ENCODE measurements at regions of chr4 and their contacts with region 1.

Region 1: GRCh38 chr4:74932816-74933561 is at the start of gene PARM1:
- DNase-seq: peak; percentile 43 to 95
- H3K4me3 ChIP-seq: peak within 1 kb of the TSS; percentile 72 to 77
- H3K27ac ChIP-seq: peak within 1 kb of the TSS; percentile 87 to 89
- H3K4me1 ChIP-seq: peaks cover 0 to 2% of the 10 kb centered on the region in 2 donors
- H3K27me3 ChIP-seq: no peaks in the 10 kb centered on the region
- CTCF ChIP-seq: peak; percentile 81 to 88 (median 86)
- total RNA-seq, gene PARM1: 116 TPM

Region 2: DNA sequence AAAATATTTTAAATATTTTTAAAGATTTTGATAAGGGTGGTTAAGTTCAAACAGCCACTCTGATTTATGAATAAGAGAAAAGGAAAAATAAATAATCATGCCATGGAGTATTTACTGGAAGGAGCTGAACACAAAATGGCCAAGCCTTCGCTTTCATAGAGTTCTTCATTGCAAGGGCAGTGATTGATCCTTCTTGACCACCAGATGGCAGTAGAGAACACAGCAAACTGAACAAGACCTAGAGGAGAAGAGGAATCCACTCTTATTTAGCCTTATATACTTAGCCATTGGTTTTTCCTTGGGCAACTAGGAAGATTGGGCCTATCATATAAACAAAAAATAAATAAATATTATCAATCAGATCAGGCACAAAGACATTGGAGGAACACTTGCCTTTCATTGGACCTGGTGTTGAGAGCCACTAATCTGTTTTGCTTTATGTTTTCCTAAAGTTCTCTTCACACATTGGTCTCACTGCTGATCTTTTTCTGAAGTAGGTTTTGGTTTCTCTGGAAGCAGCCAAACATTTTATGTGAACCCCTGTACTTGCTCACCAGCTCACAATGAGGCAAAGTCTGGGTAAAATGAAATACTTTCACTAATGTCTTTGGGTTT is 58.1 kb before region 1 on chr4:
- intact Hi-C with region 1: loop called (anchors 1 kb)
- DNase-seq: peak in 1 of 2 donors; percentile 67
- H3K4me3 ChIP-seq: peak overlapping the region in 1 of 2 donors; percentile 33
- H3K27ac ChIP-seq: peak overlapping the region; percentile 52 to 70
- H3K4me1 ChIP-seq: peaks cover 0 to 18% of the 10 kb centered on the region in 2 donors
- H3K27me3 ChIP-seq: no peaks in the 10 kb centered on the region
- CTCF ChIP-seq: peak; percentile 65 to 90 (median 90)

Region 3: GRCh38 chr4:74990276-74990875 is 57.4 kb after region 1 on chr4:
- intact Hi-C with region 1: no loop called
- DNase-seq: no peak
- H3K4me3 ChIP-seq: no peak overlapping the region
- H3K27ac ChIP-seq: no peak overlapping the region
- H3K4me1 ChIP-seq: peaks cover 0 to 22% of the 10 kb centered on the region in 2 donors
- H3K27me3 ChIP-seq: no peaks in the 10 kb centered on the region
- CTCF ChIP-seq: no peak

Region 4: DNA sequence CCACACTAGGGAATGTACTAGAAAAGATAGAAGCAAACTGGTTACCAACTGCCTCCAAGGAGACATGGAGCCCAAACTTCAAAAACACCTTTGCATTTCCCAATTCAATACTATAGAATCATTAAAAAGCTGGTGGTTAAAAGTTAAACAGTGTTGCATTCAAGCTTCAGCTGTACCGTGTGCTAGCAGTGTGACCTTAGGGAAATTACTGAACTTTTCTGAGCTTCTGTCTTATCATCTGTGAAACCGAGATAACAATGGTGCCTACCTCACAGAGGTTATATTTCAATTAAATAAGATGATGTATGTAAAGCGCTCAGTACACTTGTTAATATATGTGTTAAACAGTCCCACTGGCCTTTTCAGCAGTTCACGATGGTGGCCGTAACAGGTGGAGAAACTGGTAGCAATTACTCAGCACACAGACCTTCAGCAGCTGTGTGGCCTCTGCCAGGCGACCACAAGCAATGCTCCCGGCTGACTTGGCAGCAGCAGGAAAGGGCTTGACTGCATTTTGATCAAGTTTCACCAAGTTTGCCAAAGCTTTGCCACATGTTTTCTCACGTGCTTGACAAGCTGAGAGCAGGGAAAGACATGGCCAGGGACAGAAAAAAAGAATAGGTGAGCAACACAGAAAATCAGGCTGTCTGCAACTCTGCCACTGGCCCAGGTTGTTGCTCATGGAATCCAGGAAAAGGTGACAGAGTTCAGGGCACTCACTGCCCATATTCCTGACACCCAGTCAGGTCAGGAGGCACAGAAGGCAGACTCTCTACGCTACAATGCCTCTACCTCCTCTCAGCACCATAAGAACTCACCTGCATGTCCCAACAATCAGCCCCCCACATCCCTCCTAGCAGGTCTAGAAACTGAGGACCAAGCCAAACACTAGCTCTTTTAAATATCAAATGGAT is 72.0 kb after region 1 on chr4:
- intact Hi-C with region 1: loop called (anchors 5 kb)
- DNase-seq: peak in 1 of 2 donors; percentile 63
- H3K4me3 ChIP-seq: no peak overlapping the region
- H3K27ac ChIP-seq: peak overlapping the region; percentile 44 to 53
- H3K4me1 ChIP-seq: peaks cover 0 to 33% of the 10 kb centered on the region in 2 donors
- H3K27me3 ChIP-seq: no peaks in the 10 kb centered on the region
- CTCF ChIP-seq: no peak

Region 5: DNA sequence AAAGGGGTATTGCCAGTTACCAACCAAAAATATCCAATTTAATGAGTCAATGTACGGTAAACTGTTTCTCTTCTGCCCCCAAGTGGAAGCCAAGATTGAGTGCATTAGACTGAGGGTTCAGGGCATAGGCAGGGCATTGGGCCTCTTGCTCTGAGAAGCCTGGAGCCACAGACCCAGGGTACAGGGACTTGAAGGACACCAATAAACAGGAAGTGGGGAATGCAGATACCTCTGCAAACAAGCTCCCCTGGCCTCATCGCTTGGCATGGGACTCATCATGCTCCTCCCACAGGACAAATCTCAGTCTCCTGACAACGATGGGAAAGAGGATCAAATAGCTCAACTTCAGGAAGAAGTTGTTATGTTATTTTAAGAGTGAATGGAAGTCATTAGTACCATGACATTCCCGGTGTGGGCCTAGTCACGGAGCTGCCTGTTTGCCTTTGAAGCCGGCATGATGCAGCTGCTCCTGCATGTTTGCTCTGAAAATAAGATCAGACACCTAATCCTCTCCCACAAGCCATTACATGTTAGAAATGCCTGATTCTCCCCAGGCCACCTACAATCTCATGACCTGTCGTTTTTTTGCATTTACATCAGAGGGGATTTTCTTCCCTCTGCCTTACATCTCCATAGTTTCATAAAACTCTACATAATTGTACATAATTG is 357.1 kb after region 1 on chr4:
- intact Hi-C with region 1: loop called (anchors 2 kb)
- DNase-seq: no peak
- H3K4me3 ChIP-seq: no peak overlapping the region
- H3K27ac ChIP-seq: no peak overlapping the region
- H3K4me1 ChIP-seq: no peaks in the 10 kb centered on the region
- H3K27me3 ChIP-seq: no peaks in the 10 kb centered on the region
- CTCF ChIP-seq: peak in 2 of 3 experiments; percentile 23 to 36

Region 6: GRCh38 chr4:75490155-75490554 is 557.2 kb after region 1 on chr4:
- intact Hi-C with region 1: loop called (anchors 5 kb)
- DNase-seq: no peak
- H3K4me3 ChIP-seq: no peak overlapping the region
- H3K27ac ChIP-seq: peak overlapping the region in 1 of 2 donors; percentile 19
- H3K4me1 ChIP-seq: no peaks in the 10 kb centered on the region
- H3K27me3 ChIP-seq: no peaks in the 10 kb centered on the region
- CTCF ChIP-seq: peak in 1 of 3 experiments; percentile 52

Region 7: DNA sequence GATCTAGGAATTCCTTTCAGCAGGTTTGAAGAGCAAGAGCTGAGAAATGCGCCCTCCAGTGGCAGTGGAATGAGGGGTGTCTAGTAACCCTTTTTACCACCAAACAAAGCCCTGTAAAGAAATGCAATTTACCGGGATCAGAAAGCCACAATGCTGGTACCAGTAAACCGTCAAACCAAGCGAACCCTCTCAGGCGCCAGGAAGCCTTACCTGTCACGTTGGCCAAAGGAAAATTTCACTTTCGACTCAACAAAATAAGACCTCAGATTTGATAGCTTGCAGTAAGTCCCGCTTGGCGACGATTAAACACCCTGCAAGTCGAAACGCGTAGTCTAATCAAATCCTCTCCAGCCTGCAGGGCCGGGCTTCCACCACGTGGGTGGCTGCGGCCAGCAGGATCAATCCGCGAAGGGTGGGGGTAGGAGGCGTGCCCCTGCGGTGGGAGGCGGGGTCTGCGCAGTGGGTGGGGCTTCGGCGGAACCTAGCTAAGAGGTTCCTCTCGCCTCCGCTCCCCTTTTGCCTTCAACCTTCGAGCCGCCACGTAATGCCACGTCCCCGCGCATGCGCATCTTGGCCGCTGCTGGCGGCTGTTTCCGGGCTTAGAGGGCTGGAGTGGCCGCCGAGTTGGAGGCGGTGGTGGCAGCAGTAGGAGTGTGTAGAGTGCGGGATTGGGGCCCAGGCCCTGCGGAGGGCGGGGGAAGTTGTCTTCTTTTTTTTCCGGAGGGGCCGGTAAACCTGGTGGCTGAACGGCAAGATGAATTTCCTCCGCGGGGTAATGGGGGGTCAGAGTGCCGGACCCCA is 791.3 kb after region 1 on chr4 and contains the start of gene USO1:
- intact Hi-C with region 1: loop called (anchors 10 kb)
- DNase-seq: peak; percentile 93 to 99
- H3K4me3 ChIP-seq: peak within 1 kb of the TSS; percentile 78 to 84
- H3K27ac ChIP-seq: peak within 1 kb of the TSS; percentile 97
- H3K4me1 ChIP-seq: peaks cover 3 to 28% of the 10 kb centered on the region in 2 donors
- H3K27me3 ChIP-seq: no peaks in the 10 kb centered on the region
- CTCF ChIP-seq: peak; percentile 55 to 74 (median 67)
- total RNA-seq, gene USO1: 25.5 TPM

Measured in ascending aorta (tissue), 2 donors.